ENCODE measurements at regions of chr2 and their contacts with region 1.

Region 1: DNA sequence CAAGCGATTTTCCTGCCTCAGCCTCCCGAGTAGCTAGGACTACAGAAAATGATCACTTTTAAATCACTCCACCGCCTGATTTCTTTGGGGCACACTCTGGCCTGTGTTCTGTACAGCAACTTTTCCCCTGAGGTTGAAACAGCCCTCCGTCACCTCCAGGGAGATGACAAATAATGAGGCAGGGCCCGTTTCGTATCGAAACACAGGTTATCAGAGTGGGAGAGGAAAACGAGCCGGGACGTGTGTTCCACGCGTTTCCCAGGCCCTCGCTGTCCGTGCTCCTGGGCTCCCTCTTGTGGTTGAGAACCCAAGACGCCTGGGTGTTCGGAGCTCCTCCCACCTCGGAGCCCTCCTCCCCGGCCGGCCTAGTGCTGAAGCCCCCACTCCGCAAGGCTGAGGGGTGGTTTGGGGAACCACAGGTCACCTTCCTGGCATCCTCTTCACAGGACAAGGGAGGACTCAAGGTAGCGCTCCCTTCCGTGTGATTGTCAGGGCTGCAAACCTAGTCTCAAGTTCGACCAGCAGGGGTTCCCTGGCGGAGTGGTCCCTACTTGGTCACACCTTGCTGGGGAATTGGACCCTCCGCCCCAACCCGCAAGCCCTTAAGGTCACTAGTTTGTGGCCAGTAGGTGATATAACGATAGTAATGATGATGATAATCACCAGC is 12.8 kb downstream of the ATP6V1B1 start:
- DNase-seq: peak; percentile 84
- H3K4me3 Mint-ChIP-seq: peak overlapping the region; percentile 70
- H3K27ac Mint-ChIP-seq: peak overlapping the region; percentile 60
- H3K4me1 Mint-ChIP-seq: peaks cover 20% of the 10 kb centered on the region
- H3K27me3 Mint-ChIP-seq: peaks cover 7% of the 10 kb centered on the region
- CTCF ChIP-seq: peak; percentile 81

Region 2: DNA sequence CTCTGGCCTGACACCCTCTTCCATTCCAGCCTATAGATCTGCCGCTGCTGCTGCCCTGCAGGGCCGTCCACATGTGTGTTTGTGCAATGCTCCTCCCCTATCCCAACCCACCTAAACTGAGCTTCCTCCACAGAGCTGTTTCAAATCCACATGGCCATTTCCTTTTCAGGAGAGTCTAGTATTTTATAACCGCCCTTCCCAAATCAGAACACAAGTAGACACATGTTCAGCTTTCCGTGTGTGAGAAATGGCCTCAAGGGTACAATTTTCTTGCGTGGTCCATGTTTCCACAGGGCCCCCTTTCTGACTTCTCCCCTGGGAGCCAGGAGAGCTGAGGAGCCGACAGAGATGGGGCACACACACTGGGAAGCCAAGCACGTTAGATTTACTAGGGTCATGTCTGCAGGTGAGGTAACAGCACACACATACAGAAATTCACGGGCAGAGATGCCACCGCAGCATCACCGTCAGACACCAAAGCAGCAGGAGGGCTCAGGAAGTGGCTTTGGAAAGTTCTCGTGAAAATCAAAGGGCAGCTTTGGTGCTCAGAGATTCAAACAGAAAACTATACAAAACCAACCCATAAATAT is 292.0 kb before region 1 on chr2:
- CTCF ChIA-PET with region 1: interaction called, 8 read pairs
- POLR2A ChIA-PET with region 1: no interaction called
- intact Hi-C with region 1: loop called (anchors 1 kb)
- DNase-seq: no peak
- H3K4me3 Mint-ChIP-seq: no peak overlapping the region
- H3K27ac Mint-ChIP-seq: no peak overlapping the region
- H3K4me1 Mint-ChIP-seq: no peaks in the 10 kb centered on the region
- H3K27me3 Mint-ChIP-seq: peaks cover 57% of the 10 kb centered on the region
- CTCF ChIP-seq: no peak

Region 3: DNA sequence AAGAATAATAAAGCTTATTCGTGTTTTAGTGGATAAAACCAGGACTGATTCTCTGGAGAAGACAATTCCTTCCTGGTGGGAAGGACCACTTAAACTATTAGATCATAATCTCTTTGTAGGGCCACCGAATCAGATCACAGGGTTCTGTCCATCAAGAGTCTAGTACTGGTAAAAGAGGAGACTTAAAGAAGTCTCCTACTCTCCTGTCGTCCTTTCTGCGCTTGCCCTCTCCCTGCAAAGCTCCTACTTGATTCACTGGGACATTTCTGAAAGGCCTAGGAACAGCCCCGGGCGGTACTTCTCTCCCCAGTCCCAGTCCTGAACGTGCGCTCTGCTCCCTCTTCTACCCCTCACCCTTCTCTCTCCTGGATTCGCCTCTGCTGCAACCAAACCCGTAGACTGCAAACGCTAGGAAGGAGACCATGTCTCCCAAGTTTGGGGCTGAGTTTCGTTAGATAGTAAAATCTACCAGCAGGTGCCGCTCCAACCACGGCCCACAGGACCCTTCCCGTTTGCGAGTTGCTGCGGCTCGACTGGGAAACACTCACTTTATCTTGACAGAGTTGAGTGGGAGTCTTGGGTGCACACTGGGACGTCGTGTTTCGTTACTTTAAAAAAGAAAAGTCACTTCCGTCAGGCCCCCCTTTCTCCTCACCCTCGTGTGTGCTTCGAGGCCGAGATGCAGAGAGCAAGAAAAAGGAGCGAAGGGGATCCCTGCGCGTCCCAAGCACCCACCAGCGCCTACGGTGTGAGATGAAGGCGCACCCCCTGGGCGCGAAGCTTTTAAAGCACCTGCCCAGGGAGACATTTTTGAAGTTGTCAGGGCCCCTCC is 158.9 kb before region 1 on chr2:
- CTCF ChIA-PET with region 1: interaction called, 13 read pairs
- POLR2A ChIA-PET with region 1: no interaction called
- intact Hi-C with region 1: loop called (anchors 1 kb)
- DNase-seq: peak; percentile 63
- H3K4me3 Mint-ChIP-seq: peak overlapping the region; percentile 52
- H3K27ac Mint-ChIP-seq: no peak overlapping the region
- H3K4me1 Mint-ChIP-seq: peaks cover 5% of the 10 kb centered on the region
- H3K27me3 Mint-ChIP-seq: peaks cover 56% of the 10 kb centered on the region
- CTCF ChIP-seq: peak; percentile 53

Region 4: GRCh38 chr2:70861777-70862625 is 86.5 kb before region 1 on chr2:
- CTCF ChIA-PET with region 1: interaction called, 64 read pairs
- POLR2A ChIA-PET with region 1: no interaction called
- intact Hi-C with region 1: loop called (anchors 2 kb)
- DNase-seq: peak; percentile 83
- H3K4me3 Mint-ChIP-seq: no peak overlapping the region
- H3K27ac Mint-ChIP-seq: peak overlapping the region; percentile 17
- H3K4me1 Mint-ChIP-seq: peaks cover 6% of the 10 kb centered on the region
- H3K27me3 Mint-ChIP-seq: peaks cover 80% of the 10 kb centered on the region
- CTCF ChIP-seq: peak; percentile 94

Region 5: GRCh38 chr2:70919672-70920366 is 28.7 kb before region 1 on chr2:
- CTCF ChIA-PET with region 1: interaction called, 15 read pairs
- POLR2A ChIA-PET with region 1: no interaction called
- intact Hi-C with region 1: no loop called
- DNase-seq: peak; percentile 78
- H3K4me3 Mint-ChIP-seq: no peak overlapping the region
- H3K27ac Mint-ChIP-seq: no peak overlapping the region
- H3K4me1 Mint-ChIP-seq: no peaks in the 10 kb centered on the region
- H3K27me3 Mint-ChIP-seq: peaks cover 26% of the 10 kb centered on the region
- CTCF ChIP-seq: peak; percentile 58

Region 6: DNA sequence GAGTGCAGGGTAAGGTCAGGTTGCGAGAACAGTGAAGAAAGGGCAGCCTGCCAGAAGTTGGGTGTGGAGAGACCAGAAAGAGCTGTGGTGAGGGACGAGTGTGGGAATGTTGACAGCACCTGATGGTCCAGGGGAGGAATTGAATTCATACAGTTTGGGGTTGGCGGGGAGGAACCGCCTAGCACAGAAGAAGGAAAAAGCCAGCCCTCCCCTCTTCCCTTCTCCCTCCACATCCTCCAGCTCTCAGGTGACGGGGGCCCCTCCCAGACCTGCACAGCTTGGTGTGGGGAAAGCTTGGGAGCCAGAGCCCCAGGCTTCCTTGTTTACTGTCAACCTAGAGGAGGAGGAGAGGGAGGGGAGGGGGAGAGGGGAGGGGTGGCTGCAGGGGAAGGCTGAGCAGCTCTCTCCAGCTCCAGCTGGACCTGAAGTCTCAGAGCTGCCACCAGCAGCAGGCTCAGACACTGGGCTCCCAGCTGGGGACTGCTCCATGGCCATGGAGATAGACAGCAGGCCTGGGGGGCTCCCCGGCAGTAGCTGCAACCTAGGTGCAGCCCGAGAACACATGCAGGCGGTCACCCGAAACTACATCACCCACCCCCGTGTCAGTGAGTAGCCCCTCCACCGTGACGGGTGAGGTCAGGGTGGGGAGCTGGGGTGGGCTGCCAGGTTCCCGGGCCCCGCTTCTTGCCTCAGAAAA is 12.9 kb before region 1 on chr2 and contains the start of gene ATP6V1B1:
- CTCF ChIA-PET with region 1: interaction called, 44 read pairs
- POLR2A ChIA-PET with region 1: no interaction called
- intact Hi-C with region 1: no loop called
- DNase-seq: peak; percentile 42
- H3K4me3 Mint-ChIP-seq: no peak within 1 kb of the TSS
- H3K27ac Mint-ChIP-seq: no peak within 1 kb of the TSS
- H3K4me1 Mint-ChIP-seq: peaks cover 6% of the 10 kb centered on the region
- H3K27me3 Mint-ChIP-seq: peaks cover 16% of the 10 kb centered on the region
- CTCF ChIP-seq: no peak
- total RNA-seq, gene ATP6V1B1: not detected in 2 replicates

Region 7: GRCh38 chr2:70964596-70965386 is 16.3 kb after region 1 on chr2:
- CTCF ChIA-PET with region 1: interaction called, 13 read pairs
- POLR2A ChIA-PET with region 1: no interaction called
- intact Hi-C with region 1: no loop called
- DNase-seq: peak; percentile 43
- H3K4me3 Mint-ChIP-seq: peak overlapping the region; percentile 63
- H3K27ac Mint-ChIP-seq: no peak overlapping the region
- H3K4me1 Mint-ChIP-seq: no peaks in the 10 kb centered on the region
- H3K27me3 Mint-ChIP-seq: peaks cover 44% of the 10 kb centered on the region
- CTCF ChIP-seq: peak; percentile 57

Measured in MCF 10A (cell line).